Natural killer cell (primary cell): ENCODE measurements at regions of chr1 and their contacts with region 1.

Region 1: DNA sequence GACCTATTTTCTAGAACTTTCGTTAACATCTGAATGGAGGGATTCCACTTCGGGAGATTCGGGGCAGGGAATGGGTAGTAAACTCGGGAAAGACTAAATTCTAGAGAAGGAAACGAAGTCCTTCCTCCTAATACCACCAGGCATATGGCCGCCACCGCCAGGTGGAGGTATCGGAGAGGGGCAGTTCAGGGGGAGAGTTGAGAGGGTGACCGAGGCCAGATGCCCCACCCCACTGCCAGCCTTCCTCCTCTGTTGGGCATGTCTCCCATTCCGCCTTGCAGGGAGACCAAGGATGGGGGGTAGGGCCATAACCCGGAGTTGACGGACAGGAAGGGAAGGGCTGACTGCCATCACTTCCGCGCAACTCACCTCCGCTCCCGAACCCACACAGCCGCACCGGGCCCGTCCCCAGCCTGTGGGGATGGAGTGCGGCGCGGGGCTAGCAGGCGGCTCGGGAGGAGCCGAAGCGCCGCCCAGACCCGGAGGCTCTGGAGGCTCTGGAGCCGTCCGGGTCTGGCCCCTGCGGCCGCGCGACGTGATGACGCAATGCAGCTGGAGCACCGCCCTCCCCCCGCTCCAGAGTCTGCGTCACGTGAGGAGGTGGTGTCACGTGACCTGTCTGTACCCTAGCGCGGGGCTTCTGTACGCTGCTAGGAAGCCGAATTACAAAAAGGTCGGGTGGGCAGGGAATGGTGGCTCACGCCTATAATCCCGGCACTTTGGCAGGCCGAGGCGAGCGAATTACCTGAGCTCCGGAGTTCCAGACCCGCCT is at the start of gene KLHL12:
- DNase-seq: peak; percentile 95 to 97
- ATAC-seq: peak; percentile 94 to 98 (median 95)
- H3K4me3 ChIP-seq: peak within 1 kb of the TSS; percentile 98
- H3K4me3 Mint-ChIP-seq: peak within 1 kb of the TSS; percentile 97
- H3K27ac ChIP-seq: peak within 1 kb of the TSS; percentile 93
- H3K27ac Mint-ChIP-seq: peak within 1 kb of the TSS; percentile 91 to 97
- H3K4me1 ChIP-seq: peaks cover 13% of the 10 kb centered on the region
- H3K4me1 Mint-ChIP-seq: peaks cover 19 to 22% of the 10 kb centered on the region in 2 donors
- H3K27me3 ChIP-seq: no peaks in the 10 kb centered on the region
- H3K27me3 Mint-ChIP-seq: peaks cover 2 to 6% of the 10 kb centered on the region in 2 donors
- CTCF ChIP-seq: peak; percentile 59
- total RNA-seq, gene KLHL12: 19.2 to 23.2 (median 22.6) TPM

Region 2: GRCh38 chr1:202888531-202889360 is 38.2 kb before region 1 on chr1 and contains the start of gene RABIF:
- intact Hi-C with region 1: loop called (anchors 2 kb)
- DNase-seq: peak; percentile 96 to 98
- ATAC-seq: peak; percentile 91 to 96 (median 91)
- H3K4me3 ChIP-seq: peak within 1 kb of the TSS; percentile 75
- H3K4me3 Mint-ChIP-seq: peak within 1 kb of the TSS; percentile 97
- H3K27ac ChIP-seq: peak within 1 kb of the TSS; percentile 87
- H3K27ac Mint-ChIP-seq: peak within 1 kb of the TSS; percentile 91 to 95
- H3K4me1 ChIP-seq: peaks cover 9% of the 10 kb centered on the region
- H3K4me1 Mint-ChIP-seq: peaks cover 14 to 27% of the 10 kb centered on the region in 2 donors
- H3K27me3 ChIP-seq: no peaks in the 10 kb centered on the region
- H3K27me3 Mint-ChIP-seq: no peaks in the 10 kb centered on the region
- CTCF ChIP-seq: no peak
- total RNA-seq, gene RABIF: 13.3 to 26.4 (median 21.5) TPM

Region 3: DNA sequence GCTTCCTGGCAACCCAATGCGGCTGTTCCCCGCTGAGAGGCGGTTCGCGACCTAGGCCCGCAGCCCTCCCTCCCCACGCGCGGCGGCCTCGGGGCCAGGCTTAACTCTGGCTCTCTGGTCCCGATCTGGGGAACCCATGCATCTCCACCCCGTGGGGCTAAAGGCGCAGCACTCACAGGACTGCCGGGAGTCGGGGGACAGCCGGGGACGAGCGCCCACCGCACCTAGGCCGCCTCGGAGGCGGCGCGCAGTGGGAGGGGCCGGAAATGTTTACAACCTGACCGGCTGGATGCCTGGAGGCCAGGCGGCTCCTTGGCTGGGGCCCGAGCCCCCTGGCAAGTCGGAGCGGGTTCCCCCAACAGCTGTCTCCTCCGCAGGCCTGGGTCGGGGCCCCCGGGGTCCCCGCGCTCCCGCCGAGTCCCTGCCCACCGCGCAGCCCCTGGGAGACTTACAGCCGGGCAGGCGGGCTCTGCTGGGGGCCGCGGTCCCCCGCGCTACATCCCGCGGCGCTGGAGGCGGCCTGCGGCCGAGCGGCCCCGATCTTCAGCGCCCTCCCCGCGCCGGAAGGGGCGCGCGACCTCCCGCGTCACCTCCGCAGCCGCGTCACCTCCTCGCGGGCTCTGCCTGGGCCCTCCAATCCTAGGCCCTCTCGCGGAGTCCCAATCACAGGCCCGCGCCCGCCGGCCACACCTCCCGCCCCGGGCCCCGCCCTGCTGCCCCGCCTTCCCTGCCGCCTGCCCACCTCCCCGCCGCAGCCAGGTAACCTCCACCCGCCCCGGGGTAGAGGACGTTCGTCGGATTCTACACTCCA is 31.0 kb after region 1 on chr1 and contains the start of gene ADIPOR1:
- intact Hi-C with region 1: loop called (anchors 1 kb)
- DNase-seq: peak; percentile 89 to 95
- ATAC-seq: peak; percentile 96 to 99 (median 96)
- H3K4me3 ChIP-seq: peak within 1 kb of the TSS; percentile 74
- H3K4me3 Mint-ChIP-seq: peak within 1 kb of the TSS; percentile 86
- H3K27ac ChIP-seq: peak within 1 kb of the TSS; percentile 82
- H3K27ac Mint-ChIP-seq: peak within 1 kb of the TSS; percentile 85 to 90
- H3K4me1 ChIP-seq: peaks cover 13% of the 10 kb centered on the region
- H3K4me1 Mint-ChIP-seq: peaks cover 23 to 37% of the 10 kb centered on the region in 2 donors
- H3K27me3 ChIP-seq: no peaks in the 10 kb centered on the region
- H3K27me3 Mint-ChIP-seq: no peaks in the 10 kb centered on the region
- CTCF ChIP-seq: no peak
- total RNA-seq, gene ADIPOR1: 61.9 to 81.7 (median 80.6) TPM

Region 4: DNA sequence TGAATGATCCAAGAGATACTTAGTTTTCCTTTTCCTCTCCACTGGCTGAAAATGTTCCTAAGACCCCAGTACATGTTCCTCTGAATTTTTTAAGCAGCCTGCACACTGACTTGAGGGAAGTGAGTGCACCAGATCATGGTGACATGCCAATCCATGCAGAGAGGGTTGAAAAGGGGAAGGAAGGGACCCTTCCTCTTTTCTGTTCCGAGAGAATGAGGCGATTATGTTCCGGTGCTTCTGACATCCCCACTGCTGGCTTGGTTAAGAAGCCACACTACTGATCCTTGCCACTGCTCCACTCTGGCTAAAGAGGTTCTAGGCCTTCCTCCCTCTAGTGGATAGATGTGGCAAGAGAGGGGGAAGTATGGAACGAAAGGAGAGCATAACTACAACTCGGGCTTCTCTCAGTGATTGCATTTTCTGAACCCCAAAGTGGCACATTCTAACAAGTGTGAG is 42.0 kb after region 1 on chr1:
- intact Hi-C with region 1: loop called (anchors 1 kb)
- DNase-seq: peak in 1 of 2 donors; percentile 66
- ATAC-seq: peak; percentile 13 to 62 (median 23)
- H3K4me3 ChIP-seq: no peak overlapping the region
- H3K4me3 Mint-ChIP-seq: peak overlapping the region; percentile 55
- H3K27ac ChIP-seq: no peak overlapping the region
- H3K27ac Mint-ChIP-seq: peak overlapping the region in 1 of 2 donors; percentile 73
- H3K4me1 ChIP-seq: peaks cover 30% of the 10 kb centered on the region
- H3K4me1 Mint-ChIP-seq: peaks cover 25 to 27% of the 10 kb centered on the region in 2 donors
- H3K27me3 ChIP-seq: no peaks in the 10 kb centered on the region
- H3K27me3 Mint-ChIP-seq: peaks cover 0 to 5% of the 10 kb centered on the region in 2 donors
- CTCF ChIP-seq: peak; percentile 16

Region 5: DNA sequence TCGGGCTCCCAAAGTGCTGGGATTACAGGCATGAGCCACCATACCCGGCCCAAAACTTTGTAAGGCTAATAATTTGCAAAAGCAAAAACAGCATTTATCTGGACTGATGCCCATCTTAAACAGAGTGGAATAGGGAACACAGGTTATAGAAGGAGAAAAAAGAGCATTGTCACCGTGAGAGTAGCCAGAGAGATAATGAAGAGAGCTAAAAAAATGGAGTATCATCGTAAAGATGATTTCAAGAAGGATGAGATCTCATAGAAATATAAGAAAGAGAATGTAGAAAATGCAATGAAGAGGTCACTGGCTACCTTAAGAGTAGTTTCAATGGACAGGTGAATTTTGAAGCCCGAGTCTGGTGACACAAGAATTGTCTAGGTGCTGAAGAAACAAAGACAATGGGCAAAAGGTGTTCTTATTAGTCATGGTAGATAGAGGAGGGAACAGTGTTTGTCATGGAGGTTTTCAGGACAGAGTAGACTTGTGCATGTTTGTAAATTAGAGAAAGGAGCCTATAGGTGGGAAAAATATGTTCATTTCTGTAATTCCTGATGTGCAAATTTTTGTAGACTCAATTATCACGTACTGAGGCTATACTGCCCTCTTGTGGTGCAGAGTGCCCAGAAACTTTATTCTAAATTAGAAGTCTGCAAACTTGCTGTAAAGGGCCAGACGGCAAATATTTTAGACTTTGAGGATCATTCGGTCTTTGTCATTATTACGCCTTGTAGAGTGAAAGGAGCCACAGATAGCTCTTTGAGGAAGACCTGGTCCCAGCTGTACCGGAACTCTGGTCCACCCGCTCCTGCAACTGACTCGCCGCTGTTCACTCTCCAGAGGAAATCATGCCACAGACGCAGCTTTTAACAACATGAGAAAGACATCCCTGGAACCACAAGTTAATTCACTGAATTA is 72.2 kb after region 1 on chr1:
- intact Hi-C with region 1: loop called (anchors 1 kb)
- DNase-seq: peak; percentile 30 to 84
- ATAC-seq: peak; percentile 66 to 69 (median 67)
- H3K4me3 ChIP-seq: no peak overlapping the region
- H3K4me3 Mint-ChIP-seq: no peak overlapping the region
- H3K27ac ChIP-seq: no peak overlapping the region
- H3K27ac Mint-ChIP-seq: no peak overlapping the region
- H3K4me1 ChIP-seq: peaks cover 4% of the 10 kb centered on the region
- H3K4me1 Mint-ChIP-seq: peaks cover 5% of the 10 kb centered on the region in 2 donors
- H3K27me3 ChIP-seq: no peaks in the 10 kb centered on the region
- H3K27me3 Mint-ChIP-seq: peaks cover 25 to 42% of the 10 kb centered on the region in 2 donors
- CTCF ChIP-seq: peak; percentile 93